ENCODE measurements at regions of chr2 and their contacts with region 1.

Region 1: DNA sequence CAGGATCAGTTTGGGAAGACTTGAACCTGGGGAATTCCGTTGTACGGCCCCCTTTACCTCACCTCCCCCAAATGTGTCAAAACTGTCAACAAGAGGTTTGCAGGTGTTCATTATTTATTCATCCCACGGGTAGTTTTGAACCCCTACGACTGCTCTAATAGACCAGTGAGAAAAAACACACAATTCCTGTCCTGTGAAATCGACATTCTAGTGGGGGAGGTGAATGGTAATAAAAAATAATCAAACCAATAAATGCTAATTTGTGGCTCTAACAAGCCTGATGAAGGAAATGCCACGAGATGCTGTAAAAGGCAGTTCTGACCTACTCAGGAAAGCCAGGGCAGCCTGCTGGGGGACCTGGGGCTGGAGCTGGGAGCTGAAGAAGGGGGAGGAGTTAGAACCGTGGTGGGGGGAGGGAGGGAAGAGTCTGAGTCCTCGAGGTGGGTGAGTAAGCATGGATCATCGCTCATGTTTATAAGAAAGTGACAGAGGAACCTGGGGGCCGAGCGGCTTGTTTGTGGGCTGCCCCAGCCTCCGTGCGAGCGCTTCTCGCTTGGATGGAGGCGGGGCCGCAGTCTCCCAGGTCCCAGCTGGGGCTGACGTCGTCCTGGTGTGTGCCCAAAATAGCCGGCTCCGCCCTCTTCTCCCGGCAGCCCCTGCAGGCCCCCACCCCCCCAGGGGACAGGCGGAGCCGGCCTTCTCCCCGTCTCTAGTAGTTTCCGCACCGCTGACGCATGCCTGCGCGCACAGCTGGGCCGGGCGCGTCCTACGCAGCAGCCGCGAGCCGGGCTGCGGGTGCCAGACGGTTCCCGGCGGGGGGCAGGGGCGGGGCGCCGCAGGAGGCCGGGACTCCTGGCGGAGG is at the start of gene DNAJB2:
- DNase-seq: peak; percentile 94
- ATAC-seq: peak; percentile 85
- H3K4me3 ChIP-seq: peak within 1 kb of the TSS; percentile 59 to 65
- H3K27ac ChIP-seq: peak within 1 kb of the TSS; percentile 82
- H3K4me1 ChIP-seq: peaks cover 34 to 55% of the 10 kb centered on the region in 2 experiments
- H3K27me3 ChIP-seq: no peaks in the 10 kb centered on the region
- CTCF ChIP-seq: no peak
- POLR2A ChIP-seq: no peak
- RAD21 ChIP-seq: no peak
- total RNA-seq, gene DNAJB2: 36.2 TPM

Region 2: GRCh38 chr2:219160186-219161017 is 118.5 kb before region 1 on chr2 and contains the start of gene NHEJ1:
- CTCF ChIA-PET with region 1: interaction called, 3 read pairs
- POLR2A ChIA-PET with region 1: interaction called, 3 read pairs
- RAD21 ChIA-PET with region 1: no interaction called
- intact Hi-C with region 1: loop called (anchors 2 kb)
- DNase-seq: peak; percentile 88
- ATAC-seq: peak; percentile 94
- H3K4me3 ChIP-seq: peak within 1 kb of the TSS; percentile 67 to 69
- H3K27ac ChIP-seq: peak within 1 kb of the TSS; percentile 82
- H3K4me1 ChIP-seq: peaks cover 5 to 16% of the 10 kb centered on the region in 2 experiments; a peak in 3 of 4 replicates
- H3K27me3 ChIP-seq: no peaks in the 10 kb centered on the region
- CTCF ChIP-seq: peak; percentile 94 to 99 (median 95)
- POLR2A ChIP-seq: peak; percentile 86
- RAD21 ChIP-seq: peak; percentile 95
- total RNA-seq, gene NHEJ1: 16.4 TPM

Region 3: DNA sequence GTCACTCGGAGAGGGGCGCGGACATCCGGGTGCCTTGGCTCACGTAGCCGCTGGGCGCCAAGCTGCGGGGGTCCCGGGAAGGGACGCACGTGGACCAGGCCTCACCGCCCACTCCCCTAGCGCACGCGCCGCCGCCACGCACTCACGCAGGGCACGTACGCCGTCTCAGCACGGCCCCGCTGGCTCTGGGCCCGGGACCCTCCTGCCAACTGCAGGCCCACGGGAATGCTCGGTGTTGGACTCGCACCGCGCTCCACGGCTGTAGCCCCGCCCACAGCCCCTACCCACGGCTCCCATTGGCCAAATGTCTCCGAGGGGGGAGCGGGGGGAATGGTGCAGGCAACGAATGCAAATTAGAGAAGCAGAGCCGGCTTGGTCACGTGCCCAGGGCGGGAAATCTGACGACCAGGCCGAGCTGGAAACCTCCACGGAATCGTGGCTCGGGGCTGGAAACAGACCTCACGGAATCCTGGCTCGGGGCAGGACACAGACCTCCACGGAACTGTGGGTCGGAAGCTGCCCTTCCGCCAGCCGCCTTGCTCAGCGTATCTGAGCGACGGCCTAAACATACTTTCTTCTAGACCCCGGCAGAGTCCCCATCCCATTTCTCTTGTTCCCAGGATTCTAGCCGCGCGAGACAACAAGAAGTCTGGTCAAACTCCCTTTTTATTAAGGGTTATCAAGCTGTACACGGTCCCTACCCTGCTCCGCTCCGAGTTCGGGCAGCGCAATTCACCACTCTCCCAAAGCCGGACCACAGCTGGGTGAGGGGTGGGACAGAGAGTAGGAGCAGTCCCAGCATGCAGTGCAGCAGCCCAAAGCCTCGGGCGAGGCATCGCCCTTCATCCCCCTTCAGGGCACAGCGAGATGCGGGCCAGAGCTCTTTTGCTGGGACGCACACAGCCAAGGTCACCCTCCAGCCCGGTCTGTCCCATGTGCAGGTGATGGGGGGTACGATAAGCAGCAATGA is 59.9 kb before region 1 on chr2 and contains the start of gene ABCB6:
- CTCF ChIA-PET with region 1: interaction called, 3 read pairs
- POLR2A ChIA-PET with region 1: no interaction called
- RAD21 ChIA-PET with region 1: no interaction called
- intact Hi-C with region 1: loop called (anchors 1 kb)
- DNase-seq: peak; percentile 70
- ATAC-seq: peak; percentile 80
- H3K4me3 ChIP-seq: peak within 1 kb of the TSS; percentile 56 to 70
- H3K27ac ChIP-seq: peak within 1 kb of the TSS; percentile 81
- H3K4me1 ChIP-seq: peaks cover 9 to 37% of the 10 kb centered on the region in 2 experiments; a peak in 3 of 4 replicates
- H3K27me3 ChIP-seq: no peaks in the 10 kb centered on the region
- CTCF ChIP-seq: no peak
- POLR2A ChIP-seq: no peak
- RAD21 ChIP-seq: no peak
- total RNA-seq, gene ABCB6: 24.5 TPM

Region 4: GRCh38 chr2:219229305-219230058 is 49.4 kb before region 1 on chr2 and contains the starts of genes ANKZF1 and ATG9A:
- CTCF ChIA-PET with region 1: interaction called, 3 read pairs
- POLR2A ChIA-PET with region 1: interaction called, 3 read pairs
- RAD21 ChIA-PET with region 1: no interaction called
- intact Hi-C with region 1: loop called (anchors 1 kb)
- DNase-seq: peak; percentile 96
- ATAC-seq: peak; percentile 98
- H3K4me3 ChIP-seq: peak within 1 kb of the TSS; percentile 79 to 98
- H3K27ac ChIP-seq: peak within 1 kb of the TSS; percentile 78
- H3K4me1 ChIP-seq: peaks cover 6 to 18% of the 10 kb centered on the region in 2 experiments; a peak in 3 of 4 replicates
- H3K27me3 ChIP-seq: no peaks in the 10 kb centered on the region
- CTCF ChIP-seq: no peak
- POLR2A ChIP-seq: peak; percentile 78
- RAD21 ChIP-seq: no peak
- total RNA-seq, gene ANKZF1: 64.7 TPM
- total RNA-seq, gene ATG9A: 51.8 TPM

Region 5: GRCh38 chr2:219245148-219245898 is 33.6 kb before region 1 on chr2 and contains the starts of genes GLB1L and STK16:
- CTCF ChIA-PET with region 1: interaction called, 14 read pairs
- POLR2A ChIA-PET with region 1: interaction called, 8 read pairs
- RAD21 ChIA-PET with region 1: interaction called in 1 of 2 experiments, 3 read pairs
- intact Hi-C with region 1: no loop called
- DNase-seq: peak; percentile 83
- ATAC-seq: peak; percentile 90
- H3K4me3 ChIP-seq: peak within 1 kb of the TSS; percentile 80 to 96
- H3K27ac ChIP-seq: peak within 1 kb of the TSS; percentile 79
- H3K4me1 ChIP-seq: peaks cover 27 to 39% of the 10 kb centered on the region in 2 experiments
- H3K27me3 ChIP-seq: no peaks in the 10 kb centered on the region
- CTCF ChIP-seq: no peak
- POLR2A ChIP-seq: peak; percentile 72
- RAD21 ChIP-seq: no peak
- total RNA-seq, gene GLB1L: 6.6 TPM
- total RNA-seq, gene STK16: 31.4 TPM